ENCODE measurements at regions of chr1 and their contacts with region 1.

Region 1: GRCh38 chr1:199551967-199552565 is 475.4 kb upstream of the NR5A2 start:
- DNase-seq: peak in 3 of 9 experiments; percentile 16 to 54 (median 30)
- ATAC-seq: no peak
- H3K4me3 ChIP-seq: no peak overlapping the region
- H3K4me3 Mint-ChIP-seq: no peak overlapping the region
- H3K27ac ChIP-seq: no peak overlapping the region
- H3K27ac Mint-ChIP-seq: no peak overlapping the region
- H3K4me1 ChIP-seq: no peaks in the 10 kb centered on the region
- H3K4me1 Mint-ChIP-seq: no peaks in the 10 kb centered on the region
- H3K27me3 ChIP-seq: no peaks in the 10 kb centered on the region
- H3K27me3 Mint-ChIP-seq: peaks cover 11% of the 10 kb centered on the region
- CTCF ChIP-seq: peak; percentile 45

Region 2: DNA sequence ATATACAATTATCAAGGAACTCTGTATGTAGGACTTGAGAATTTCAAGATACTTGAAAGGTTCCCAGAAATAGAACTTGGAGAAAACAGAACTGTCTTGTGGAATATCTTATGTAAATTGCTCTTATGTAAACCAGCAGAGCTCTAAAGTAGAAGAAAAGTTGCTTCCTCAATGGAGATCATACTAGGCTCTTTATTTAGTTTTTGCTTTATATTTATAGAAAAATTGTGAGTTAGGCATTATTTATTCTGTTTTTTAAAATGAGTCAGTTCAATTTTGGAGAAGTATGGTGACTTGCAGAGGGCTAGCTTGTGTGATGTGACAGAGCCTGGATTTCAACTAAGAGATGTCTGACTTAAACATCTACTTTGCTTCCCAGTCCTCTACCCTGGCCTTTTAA is 1052.0 kb before region 1 on chr1:
- CTCF ChIA-PET with region 1: no interaction called
- POLR2A ChIA-PET with region 1: no interaction called
- intact Hi-C with region 1: loop called in 1 of 2 experiments (anchors 5 kb)
- DNase-seq: no peak
- ATAC-seq: no peak
- H3K4me3 ChIP-seq: no peak overlapping the region
- H3K4me3 Mint-ChIP-seq: no peak overlapping the region
- H3K27ac ChIP-seq: no peak overlapping the region
- H3K27ac Mint-ChIP-seq: peak overlapping the region; percentile 21
- H3K4me1 ChIP-seq: no peaks in the 10 kb centered on the region
- H3K4me1 Mint-ChIP-seq: peaks cover 6% of the 10 kb centered on the region
- H3K27me3 ChIP-seq: no peaks in the 10 kb centered on the region
- H3K27me3 Mint-ChIP-seq: no peaks in the 10 kb centered on the region
- CTCF ChIP-seq: no peak

Region 3: GRCh38 chr1:198771563-198772153 is 780.4 kb before region 1 on chr1:
- CTCF ChIA-PET with region 1: no interaction called
- POLR2A ChIA-PET with region 1: no interaction called
- intact Hi-C with region 1: loop called (anchors 5 kb)
- DNase-seq: peak in 2 of 9 experiments; percentile 38 to 61
- ATAC-seq: no peak
- H3K4me3 ChIP-seq: no peak overlapping the region
- H3K4me3 Mint-ChIP-seq: no peak overlapping the region
- H3K27ac ChIP-seq: no peak overlapping the region
- H3K27ac Mint-ChIP-seq: no peak overlapping the region
- H3K4me1 ChIP-seq: no peaks in the 10 kb centered on the region
- H3K4me1 Mint-ChIP-seq: peaks cover 2% of the 10 kb centered on the region
- H3K27me3 ChIP-seq: no peaks in the 10 kb centered on the region
- H3K27me3 Mint-ChIP-seq: no peaks in the 10 kb centered on the region
- CTCF ChIP-seq: peak; percentile 65

Region 4: DNA sequence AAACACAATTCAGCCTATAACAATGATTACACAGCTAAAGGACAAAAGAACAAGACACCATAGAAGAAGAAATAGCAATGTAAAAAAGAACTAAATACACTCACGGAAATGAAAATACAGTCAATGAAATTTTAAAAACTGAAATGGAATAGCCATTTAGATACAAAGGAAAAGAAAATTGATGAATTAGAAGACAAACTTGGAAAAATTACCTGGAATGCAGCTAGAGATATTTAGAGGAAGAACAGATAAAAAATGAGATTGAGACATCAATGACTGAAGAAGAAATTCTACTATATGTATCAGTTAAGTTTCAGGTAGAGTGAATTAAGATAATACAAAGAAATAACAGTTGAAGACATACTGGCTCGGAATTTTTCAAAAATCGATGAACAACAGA is 45.1 kb after region 1 on chr1:
- CTCF ChIA-PET with region 1: no interaction called
- POLR2A ChIA-PET with region 1: no interaction called
- intact Hi-C with region 1: no loop called
- DNase-seq: no peak
- ATAC-seq: no peak
- H3K4me3 ChIP-seq: no peak overlapping the region
- H3K4me3 Mint-ChIP-seq: no peak overlapping the region
- H3K27ac ChIP-seq: no peak overlapping the region
- H3K27ac Mint-ChIP-seq: no peak overlapping the region
- H3K4me1 ChIP-seq: no peaks in the 10 kb centered on the region
- H3K4me1 Mint-ChIP-seq: no peaks in the 10 kb centered on the region
- H3K27me3 ChIP-seq: no peaks in the 10 kb centered on the region
- H3K27me3 Mint-ChIP-seq: peaks cover 13% of the 10 kb centered on the region
- CTCF ChIP-seq: no peak

Region 5: DNA sequence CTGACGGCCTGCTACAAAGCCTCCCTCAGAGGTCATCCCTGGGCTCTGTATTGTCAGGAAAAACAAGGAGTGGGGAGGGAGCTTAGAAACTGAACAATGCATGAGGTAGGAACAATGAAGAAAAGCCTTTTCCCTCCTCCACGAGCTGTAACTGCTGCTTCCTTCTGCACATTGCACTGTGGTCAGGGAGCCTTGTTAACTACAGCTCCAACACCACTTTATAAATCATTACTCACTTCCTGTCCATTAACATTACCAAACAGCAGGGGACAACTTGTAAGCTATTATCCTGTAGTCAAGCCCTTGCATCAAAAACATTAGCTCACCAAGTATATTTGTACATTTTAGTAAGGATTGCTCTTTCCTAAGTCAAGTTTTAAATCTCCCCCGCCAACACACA is 139.5 kb after region 1 on chr1:
- CTCF ChIA-PET with region 1: no interaction called
- POLR2A ChIA-PET with region 1: no interaction called
- intact Hi-C with region 1: no loop called
- DNase-seq: peak in 1 of 9 experiments; percentile 5
- ATAC-seq: no peak
- H3K4me3 ChIP-seq: no peak overlapping the region
- H3K4me3 Mint-ChIP-seq: no peak overlapping the region
- H3K27ac ChIP-seq: no peak overlapping the region
- H3K27ac Mint-ChIP-seq: no peak overlapping the region
- H3K4me1 ChIP-seq: no peaks in the 10 kb centered on the region
- H3K4me1 Mint-ChIP-seq: no peaks in the 10 kb centered on the region
- H3K27me3 ChIP-seq: no peaks in the 10 kb centered on the region
- H3K27me3 Mint-ChIP-seq: peaks cover 32% of the 10 kb centered on the region
- CTCF ChIP-seq: no peak